MCF 10A (cell line): ENCODE measurements at regions of chr20 and their contacts with region 1.

Region 1: DNA sequence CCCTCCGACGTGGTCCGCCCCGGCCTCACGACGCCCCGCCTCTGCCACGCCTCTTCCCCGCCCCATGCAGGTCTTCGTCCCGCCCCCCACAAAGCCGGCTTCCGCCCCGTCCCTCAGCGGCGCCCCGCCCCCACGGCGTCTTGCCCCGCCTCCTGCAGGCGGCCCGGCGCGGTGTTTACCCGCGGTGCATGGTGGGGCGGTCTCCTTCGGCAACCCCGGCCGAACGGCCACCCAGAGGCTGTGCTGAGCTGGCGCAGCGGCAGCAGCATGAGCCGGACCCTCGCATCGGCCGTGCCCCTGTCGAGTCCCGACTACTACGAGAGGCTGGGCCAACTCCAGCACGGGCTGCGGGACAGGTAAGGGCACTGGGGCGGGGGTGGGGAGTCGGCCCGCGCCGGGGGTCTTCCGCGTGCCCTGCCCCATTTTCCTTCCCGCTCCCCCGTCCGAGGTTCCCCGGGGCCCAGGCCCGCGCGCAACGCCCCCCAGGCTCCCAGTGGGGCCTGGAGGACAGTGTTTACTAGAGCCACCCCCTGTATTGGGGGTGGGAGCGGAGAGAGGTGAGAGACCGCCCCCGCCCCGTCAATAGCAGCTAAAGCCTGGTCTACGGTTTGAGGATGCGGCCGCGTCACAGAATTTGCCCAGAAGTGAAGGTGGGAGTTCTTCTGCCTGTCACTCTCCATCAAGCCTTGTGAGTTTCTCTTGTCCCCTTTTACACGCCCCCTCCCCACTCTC is at the start of gene KIZ:
- DNase-seq: peak; percentile 93
- H3K4me3 Mint-ChIP-seq: peak within 1 kb of the TSS; percentile 85
- H3K27ac Mint-ChIP-seq: peak within 1 kb of the TSS; percentile 86
- H3K4me1 Mint-ChIP-seq: peaks cover 9% of the 10 kb centered on the region
- H3K27me3 Mint-ChIP-seq: no peaks in the 10 kb centered on the region
- CTCF ChIP-seq: peak; percentile 31
- total RNA-seq, gene KIZ: 47.2 and 56.1 TPM in 2 replicates

Region 2: DNA sequence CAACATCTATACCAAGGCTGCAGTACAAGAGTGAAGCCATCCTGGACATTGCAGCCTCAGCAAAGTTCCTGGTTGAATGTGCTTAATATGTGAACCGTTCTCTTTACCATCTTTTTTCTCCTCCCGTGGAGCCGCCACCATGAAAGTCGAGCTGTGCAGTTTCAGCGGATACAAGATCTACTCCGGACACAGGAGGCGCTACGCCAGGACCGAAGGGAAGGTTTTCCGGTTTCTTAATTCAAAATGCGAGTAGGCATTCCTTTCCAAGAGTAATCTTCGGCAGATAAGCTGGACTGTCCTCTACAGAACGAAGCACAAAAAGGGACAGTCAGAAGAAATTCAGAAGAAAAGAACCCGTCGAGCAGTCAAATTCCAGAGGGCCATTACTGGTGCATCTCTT is 11.4 kb before region 1 on chr20:
- CTCF ChIA-PET with region 1: interaction called, 10 read pairs
- POLR2A ChIA-PET with region 1: interaction called, 3 read pairs
- intact Hi-C with region 1: no loop called
- DNase-seq: no peak
- H3K4me3 Mint-ChIP-seq: no peak overlapping the region
- H3K27ac Mint-ChIP-seq: no peak overlapping the region
- H3K4me1 Mint-ChIP-seq: no peaks in the 10 kb centered on the region
- H3K27me3 Mint-ChIP-seq: no peaks in the 10 kb centered on the region
- CTCF ChIP-seq: no peak

Region 3: GRCh38 chr20:21137078-21137477 is 11.1 kb after region 1 on chr20:
- CTCF ChIA-PET with region 1: interaction called, 6 read pairs
- POLR2A ChIA-PET with region 1: interaction called, 19 read pairs
- intact Hi-C with region 1: no loop called
- DNase-seq: no peak
- H3K4me3 Mint-ChIP-seq: no peak overlapping the region
- H3K27ac Mint-ChIP-seq: no peak overlapping the region
- H3K4me1 Mint-ChIP-seq: no peaks in the 10 kb centered on the region
- H3K27me3 Mint-ChIP-seq: no peaks in the 10 kb centered on the region
- CTCF ChIP-seq: no peak

Region 4: DNA sequence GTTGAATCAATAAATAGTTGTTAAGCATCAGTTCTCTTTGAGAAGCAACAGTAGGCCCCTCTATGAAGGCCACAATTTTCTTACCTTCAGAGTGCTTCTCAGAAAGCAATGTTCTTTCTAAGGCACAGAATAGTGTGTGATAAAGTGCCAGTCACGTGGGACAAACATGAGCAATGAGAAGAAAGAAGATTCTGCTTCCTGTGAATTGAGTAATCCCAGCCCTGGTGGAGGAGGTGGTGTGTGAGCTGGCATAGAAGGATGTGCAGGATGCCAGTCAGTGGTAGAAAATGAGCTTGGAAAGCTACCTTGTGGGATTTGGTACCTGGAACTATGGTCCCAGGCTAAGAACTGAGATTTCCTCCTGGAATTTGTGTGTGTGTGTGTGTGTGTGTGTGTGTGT is 21.6 kb after region 1 on chr20:
- CTCF ChIA-PET with region 1: interaction called, 17 read pairs
- POLR2A ChIA-PET with region 1: interaction called, 22 read pairs
- intact Hi-C with region 1: no loop called
- DNase-seq: peak; percentile 58
- H3K4me3 Mint-ChIP-seq: no peak overlapping the region
- H3K27ac Mint-ChIP-seq: peak overlapping the region; percentile 20
- H3K4me1 Mint-ChIP-seq: peaks cover 8% of the 10 kb centered on the region
- H3K27me3 Mint-ChIP-seq: no peaks in the 10 kb centered on the region
- CTCF ChIP-seq: no peak

Region 5: DNA sequence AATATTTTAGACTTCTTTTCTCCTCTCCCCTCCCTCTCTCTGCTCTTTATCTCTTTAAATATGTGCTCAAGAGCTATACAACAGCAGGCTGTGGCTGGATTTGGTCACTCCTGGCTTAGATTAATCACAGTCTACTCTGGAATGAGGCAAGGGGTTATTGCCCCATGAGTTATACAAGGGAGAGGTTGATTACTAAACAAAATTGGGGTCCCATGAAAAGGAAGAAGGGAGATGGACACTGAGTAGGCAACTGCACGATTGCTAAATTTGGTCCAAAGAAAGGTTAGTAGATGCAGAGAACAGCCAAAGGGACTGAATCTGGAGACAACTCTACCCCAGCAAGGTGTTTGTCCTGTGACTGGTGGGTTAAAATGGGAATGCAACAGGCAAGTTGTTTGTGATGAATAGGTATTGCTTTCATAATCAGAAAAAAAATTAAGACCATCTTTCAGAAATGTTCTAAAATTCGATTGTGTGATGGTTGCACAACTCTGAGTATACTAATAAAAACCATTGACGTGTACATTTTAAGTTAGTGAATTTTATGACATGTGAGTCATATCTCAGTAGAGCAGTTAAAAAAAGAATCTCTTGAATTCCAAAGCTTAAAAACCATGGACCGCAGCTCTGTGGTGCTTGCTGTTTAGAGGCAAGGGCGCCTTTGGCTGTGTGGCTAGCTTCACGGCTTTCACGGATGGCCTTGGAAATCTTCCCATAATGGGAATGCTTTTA is 57.0 kb after region 1 on chr20:
- CTCF ChIA-PET with region 1: interaction called, 12 read pairs
- POLR2A ChIA-PET with region 1: interaction called, 84 read pairs
- intact Hi-C with region 1: loop called (anchors 2 kb)
- DNase-seq: peak; percentile 82
- H3K4me3 Mint-ChIP-seq: peak overlapping the region; percentile 21
- H3K27ac Mint-ChIP-seq: peak overlapping the region; percentile 61
- H3K4me1 Mint-ChIP-seq: peaks cover 40% of the 10 kb centered on the region
- H3K27me3 Mint-ChIP-seq: no peaks in the 10 kb centered on the region
- CTCF ChIP-seq: no peak